ENCODE measurements at regions of chr17 and their contacts with region 1.

Region 1: GRCh38 chr17:81860756-81861518 is 602 bp upstream of the P4HB start:
- DNase-seq: peak; percentile 99
- ATAC-seq: peak; percentile 91
- H3K4me3 Mint-ChIP-seq: peak overlapping the region; percentile 99
- H3K27ac Mint-ChIP-seq: peak overlapping the region; percentile 98
- H3K4me1 Mint-ChIP-seq: peaks cover 50% of the 10 kb centered on the region
- H3K27me3 Mint-ChIP-seq: no peaks in the 10 kb centered on the region

Region 2: GRCh38 chr17:81636505-81637288 is 224.2 kb before region 1 on chr17 and contains the starts of genes NPLOC4 and TSPAN10:
- CTCF ChIA-PET with region 1: no interaction called
- POLR2A ChIA-PET with region 1: no interaction called
- intact Hi-C with region 1: loop called in 1 of 2 experiments (anchors 1 kb)
- DNase-seq: peak; percentile 91
- ATAC-seq: peak; percentile 89
- H3K4me3 Mint-ChIP-seq: peak within 1 kb of the TSS; percentile 96
- H3K27ac Mint-ChIP-seq: peak within 1 kb of the TSS; percentile 84
- H3K4me1 Mint-ChIP-seq: peaks cover 23% of the 10 kb centered on the region
- H3K27me3 Mint-ChIP-seq: no peaks in the 10 kb centered on the region
- total RNA-seq, gene NPLOC4: 71.8 to 93.1 TPM
- total RNA-seq, gene TSPAN10: 0.34 to 0.35 TPM

Region 3: DNA sequence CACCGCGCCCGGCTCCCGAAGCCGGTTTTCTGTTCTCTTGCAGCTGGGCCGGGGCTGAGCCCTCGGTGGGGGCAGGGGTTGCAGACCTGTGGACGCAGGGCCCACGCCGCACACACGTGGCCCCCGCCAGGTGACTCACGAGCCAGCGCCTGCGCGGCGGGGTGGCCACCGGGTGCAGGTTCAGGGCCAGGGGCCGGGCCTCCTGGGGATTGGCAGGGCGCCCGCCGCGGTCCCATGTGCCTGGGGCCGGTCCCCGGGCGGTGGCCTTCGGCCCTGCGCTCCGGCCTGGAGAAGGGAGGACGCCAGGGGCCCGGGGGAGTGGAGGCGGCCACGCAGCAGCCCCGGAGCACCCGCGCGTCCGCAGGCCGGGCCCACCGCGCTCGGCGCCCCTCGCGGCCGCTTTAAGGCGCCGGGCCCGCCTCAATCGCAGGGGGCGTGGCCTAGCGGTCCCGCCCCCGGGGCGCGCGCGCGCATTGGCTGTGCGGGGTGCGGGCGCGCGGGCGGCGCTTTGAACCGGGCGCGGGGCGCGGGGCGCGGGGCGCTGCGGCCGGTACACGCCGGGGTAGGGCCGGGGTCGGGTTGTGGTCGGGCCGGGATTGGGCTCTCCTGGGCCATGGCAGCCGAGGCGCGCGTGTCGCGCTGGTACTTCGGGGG is 149.0 kb before region 1 on chr17 and contains the start of gene SLC25A10:
- CTCF ChIA-PET with region 1: no interaction called
- POLR2A ChIA-PET with region 1: no interaction called
- intact Hi-C with region 1: loop called in 1 of 2 experiments (anchors 1 kb)
- DNase-seq: peak; percentile 93
- ATAC-seq: peak; percentile 87
- H3K4me3 Mint-ChIP-seq: peak within 1 kb of the TSS; percentile 89
- H3K27ac Mint-ChIP-seq: peak within 1 kb of the TSS; percentile 84
- H3K4me1 Mint-ChIP-seq: peaks cover 24% of the 10 kb centered on the region
- H3K27me3 Mint-ChIP-seq: no peaks in the 10 kb centered on the region
- total RNA-seq, gene SLC25A10: 28.6 to 31.8 TPM

Region 4: DNA sequence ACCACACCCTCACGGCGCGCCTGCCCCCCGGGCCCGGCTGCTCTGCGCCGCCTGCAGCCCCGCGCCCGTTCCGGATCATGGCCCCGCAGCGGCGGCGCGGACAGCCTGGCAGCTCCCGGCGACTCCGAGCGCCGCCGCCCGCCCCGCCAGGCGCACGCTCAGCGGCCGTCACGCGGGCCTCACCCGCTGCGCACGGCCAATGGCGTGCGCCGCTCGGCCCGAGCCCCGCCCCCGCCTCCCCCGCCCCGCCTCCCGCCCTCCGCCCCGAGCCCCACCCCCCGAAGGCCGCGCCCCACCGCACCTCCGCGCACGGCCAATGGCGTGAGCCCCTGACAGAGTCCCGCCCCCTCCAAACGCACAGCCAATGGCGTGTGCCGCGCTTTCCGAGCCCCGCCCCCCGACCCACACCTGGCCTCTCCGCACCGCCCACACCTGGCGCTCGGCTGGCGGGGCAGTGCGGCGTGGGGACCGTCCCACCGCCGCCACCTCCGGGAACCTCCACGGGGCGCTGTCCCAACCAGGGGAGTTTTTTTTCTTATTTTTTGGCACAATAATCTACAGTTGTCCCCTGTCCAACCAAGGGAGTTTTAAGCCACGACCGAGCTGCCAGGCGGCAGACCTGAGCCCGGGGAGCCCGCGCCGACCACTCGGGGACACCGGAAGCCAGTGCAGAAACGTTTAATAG is 50.5 kb after region 1 on chr17 and contains the start of gene PCYT2:
- CTCF ChIA-PET with region 1: no interaction called
- POLR2A ChIA-PET with region 1: no interaction called
- intact Hi-C with region 1: loop called in 1 of 2 experiments (anchors 1 kb)
- DNase-seq: peak; percentile 97
- ATAC-seq: peak; percentile 96
- H3K4me3 Mint-ChIP-seq: peak within 1 kb of the TSS; percentile 79
- H3K27ac Mint-ChIP-seq: no peak within 1 kb of the TSS
- H3K4me1 Mint-ChIP-seq: peaks cover 14% of the 10 kb centered on the region
- H3K27me3 Mint-ChIP-seq: no peaks in the 10 kb centered on the region
- total RNA-seq, gene PCYT2: 19.7 to 24.0 TPM

Region 5: GRCh38 chr17:81977211-81978027 is 116.5 kb after region 1 on chr17 and contains the start of gene ASPSCR1:
- CTCF ChIA-PET with region 1: no interaction called
- POLR2A ChIA-PET with region 1: no interaction called
- intact Hi-C with region 1: loop called in 1 of 2 experiments (anchors 1 kb)
- DNase-seq: peak; percentile 95
- ATAC-seq: peak; percentile 83
- H3K4me3 Mint-ChIP-seq: peak within 1 kb of the TSS; percentile 94
- H3K27ac Mint-ChIP-seq: peak within 1 kb of the TSS; percentile 98
- H3K4me1 Mint-ChIP-seq: peaks cover 32% of the 10 kb centered on the region
- H3K27me3 Mint-ChIP-seq: no peaks in the 10 kb centered on the region
- total RNA-seq, gene ASPSCR1: 23.3 to 26.5 TPM